Activated naive CD4-positive, alpha-beta T cell treated with anti-CD3 and anti-CD28 coated beads for 36 hours (primary cell): ENCODE measurements at regions of chr9 and their contacts with region 1.

Region 1: DNA sequence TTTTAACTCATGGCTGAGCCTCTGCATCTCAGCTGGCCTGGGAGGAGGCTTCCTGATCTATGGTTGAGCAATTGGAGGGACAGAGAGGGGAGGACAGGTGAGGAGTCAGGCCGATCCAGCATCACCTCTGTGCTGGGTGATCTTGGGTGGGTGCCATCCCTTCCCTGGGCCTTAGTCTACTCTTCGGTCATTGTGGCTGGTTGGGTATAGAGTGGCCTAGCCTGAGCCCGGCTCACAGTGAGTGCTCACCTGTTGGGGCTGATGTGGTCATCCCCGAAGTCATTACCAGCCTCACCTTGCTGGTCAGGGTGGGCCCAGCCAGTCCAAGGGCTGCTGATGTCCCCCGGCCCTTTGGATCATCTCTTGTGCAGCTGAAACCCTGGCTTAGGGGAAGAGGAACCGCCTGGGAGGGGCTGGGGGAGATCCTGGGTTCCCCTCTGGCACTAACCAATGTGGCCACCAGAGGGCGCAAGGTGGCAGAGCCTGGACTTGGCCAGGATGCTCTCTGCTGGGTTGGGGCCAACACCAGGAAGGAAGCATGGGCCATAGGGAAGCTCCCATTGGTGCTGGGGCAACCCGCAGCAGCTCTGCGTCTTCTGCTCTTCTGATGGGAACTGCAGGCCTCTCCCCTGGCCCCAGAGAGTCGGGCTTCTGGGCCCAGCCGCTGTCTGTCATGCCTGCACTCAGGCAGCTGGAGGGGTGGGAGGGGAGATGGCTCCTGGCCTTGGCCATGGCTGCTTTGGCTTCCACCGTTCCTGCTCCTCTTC is 17.3 kb upstream of the ODF2 start:
- DNase-seq: peak; percentile 91
- H3K4me3 Mint-ChIP-seq: no peak overlapping the region
- H3K27ac Mint-ChIP-seq: no peak overlapping the region
- H3K4me1 Mint-ChIP-seq: no peaks in the 10 kb centered on the region
- H3K27me3 Mint-ChIP-seq: no peaks in the 10 kb centered on the region

Region 2: DNA sequence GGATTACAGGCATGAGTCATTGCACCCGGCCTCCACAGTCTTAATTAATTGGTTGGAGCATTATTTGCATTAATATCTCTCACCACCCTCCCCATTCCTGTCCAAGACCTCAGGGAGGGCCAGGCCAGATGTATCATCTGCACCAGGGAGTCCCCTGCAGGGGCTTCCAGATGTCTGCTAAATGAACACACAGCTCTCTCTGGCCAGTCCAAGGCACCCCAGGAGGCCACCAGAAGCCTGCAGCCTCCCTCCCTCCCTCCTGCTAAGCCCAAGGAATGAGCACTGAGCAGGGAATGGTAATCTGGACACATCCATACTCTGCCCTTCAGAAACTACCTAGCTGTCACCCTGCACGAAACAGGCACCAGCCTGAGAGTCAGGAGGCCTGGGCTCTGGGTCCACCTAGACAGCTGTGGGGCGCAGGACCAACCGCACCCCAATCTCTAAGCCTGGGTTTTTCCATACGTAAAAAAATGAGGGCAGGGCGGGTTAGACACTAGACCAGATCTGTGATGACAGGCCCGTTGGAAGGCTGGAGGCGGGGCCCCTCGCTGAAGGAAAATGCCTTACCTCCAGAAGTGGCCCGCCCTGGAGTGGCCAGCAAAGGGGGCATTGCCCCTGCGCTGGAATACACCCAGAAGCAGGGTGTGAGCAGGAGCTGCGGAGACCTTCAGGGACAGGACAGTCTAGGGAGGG is 255.5 kb before region 1 on chr9:
- CTCF ChIA-PET with region 1: no interaction called
- intact Hi-C with region 1: no loop called
- DNase-seq: no peak
- H3K4me3 Mint-ChIP-seq: no peak overlapping the region
- H3K27ac Mint-ChIP-seq: no peak overlapping the region
- H3K4me1 Mint-ChIP-seq: peaks cover 2% of the 10 kb centered on the region
- H3K27me3 Mint-ChIP-seq: no peaks in the 10 kb centered on the region

Region 3: DNA sequence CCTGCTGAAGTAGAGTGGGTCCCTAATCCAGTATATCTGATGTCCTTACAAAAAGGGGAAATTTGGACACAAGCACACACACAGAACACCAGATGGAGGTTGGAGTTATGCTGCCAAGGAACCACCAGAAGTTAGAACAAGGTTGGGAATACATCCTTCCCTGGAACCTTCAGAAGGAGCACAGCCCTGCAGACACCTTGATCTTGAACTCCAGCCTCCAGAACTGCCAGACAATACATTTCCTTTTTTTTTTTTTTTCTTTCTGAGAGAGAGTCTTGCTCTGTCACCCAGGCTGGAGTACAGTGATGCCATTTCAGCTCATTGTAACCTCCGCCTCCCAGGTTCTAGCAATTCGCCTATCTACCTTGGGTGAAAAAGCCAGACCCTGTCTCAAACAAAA is 10.2 kb after region 1 on chr9:
- CTCF ChIA-PET with region 1: interaction called, 14 read pairs
- intact Hi-C with region 1: no loop called
- DNase-seq: no peak
- H3K4me3 Mint-ChIP-seq: no peak overlapping the region
- H3K27ac Mint-ChIP-seq: no peak overlapping the region
- H3K4me1 Mint-ChIP-seq: no peaks in the 10 kb centered on the region
- H3K27me3 Mint-ChIP-seq: no peaks in the 10 kb centered on the region

Region 4: DNA sequence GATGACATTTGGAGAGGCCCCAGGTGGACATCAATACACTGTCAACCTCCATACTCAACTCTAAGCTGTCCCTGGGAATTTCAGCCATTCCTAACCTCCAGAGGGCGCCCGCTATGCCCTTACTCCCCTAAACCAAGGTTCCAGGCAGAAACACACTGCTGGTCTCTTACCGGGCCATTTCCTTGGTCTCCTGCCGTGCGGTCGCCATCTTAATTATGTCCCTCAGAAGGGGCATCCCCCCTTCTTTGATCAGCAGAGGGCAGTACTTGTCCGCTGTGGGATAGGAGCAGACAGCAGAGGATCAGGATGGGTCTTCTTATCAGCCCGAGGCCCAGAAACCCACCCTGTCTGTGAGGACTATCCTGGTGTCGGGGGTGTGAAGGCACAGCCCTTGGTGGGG is 294.7 kb after region 1 on chr9:
- CTCF ChIA-PET with region 1: no interaction called
- intact Hi-C with region 1: no loop called
- DNase-seq: peak; percentile 53
- H3K4me3 Mint-ChIP-seq: no peak overlapping the region
- H3K27ac Mint-ChIP-seq: no peak overlapping the region
- H3K4me1 Mint-ChIP-seq: no peaks in the 10 kb centered on the region
- H3K27me3 Mint-ChIP-seq: no peaks in the 10 kb centered on the region